B cell (primary cell): ENCODE measurements at regions of chr17 and their contacts with region 1.

Region 1: DNA sequence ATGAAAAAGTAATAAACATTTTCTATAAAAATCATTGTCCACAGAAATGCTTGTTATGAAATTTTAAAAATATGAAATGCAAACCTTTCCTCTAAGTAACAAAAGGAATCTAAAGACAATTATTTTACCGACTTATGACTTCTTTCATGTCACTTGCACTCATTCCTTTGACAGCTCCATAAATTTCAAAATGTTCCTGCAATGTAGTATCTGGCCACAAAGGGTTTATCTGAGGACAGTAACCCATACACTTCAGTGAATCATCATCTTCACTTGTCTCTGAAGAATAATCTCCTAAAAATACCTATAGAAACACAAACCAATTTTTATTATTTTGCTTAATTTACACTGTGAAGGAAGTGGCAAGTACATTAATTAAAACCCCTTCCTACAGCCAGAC is 25.6 kb upstream of the ABCA10 start:
- DNase-seq: no peak
- ATAC-seq: no peak
- H3K4me3 ChIP-seq: no peak overlapping the region
- H3K4me3 Mint-ChIP-seq: no peak overlapping the region
- H3K27ac ChIP-seq: no peak overlapping the region
- H3K27ac Mint-ChIP-seq: no peak overlapping the region
- H3K4me1 ChIP-seq: no peaks in the 10 kb centered on the region
- H3K4me1 Mint-ChIP-seq: no peaks in the 10 kb centered on the region
- H3K27me3 ChIP-seq: no peaks in the 10 kb centered on the region
- H3K27me3 Mint-ChIP-seq: no peaks in the 10 kb centered on the region
- CTCF ChIP-seq: no peak

Region 2: GRCh38 chr17:68446626-68447041 is 807.6 kb before region 1 on chr17:
- CTCF ChIA-PET with region 1: no interaction called
- POLR2A ChIA-PET with region 1: interaction called, 10 read pairs
- intact Hi-C with region 1: no loop called
- DNase-seq: no peak
- ATAC-seq: no peak
- H3K4me3 ChIP-seq: no peak overlapping the region
- H3K4me3 Mint-ChIP-seq: no peak overlapping the region
- H3K27ac ChIP-seq: no peak overlapping the region
- H3K27ac Mint-ChIP-seq: no peak overlapping the region
- H3K4me1 ChIP-seq: peaks cover under 1 to 2% of the 10 kb centered on the region in 2 donors
- H3K4me1 Mint-ChIP-seq: peaks cover 1% of the 10 kb centered on the region
- H3K27me3 ChIP-seq: no peaks in the 10 kb centered on the region
- H3K27me3 Mint-ChIP-seq: no peaks in the 10 kb centered on the region
- CTCF ChIP-seq: no peak

Region 3: DNA sequence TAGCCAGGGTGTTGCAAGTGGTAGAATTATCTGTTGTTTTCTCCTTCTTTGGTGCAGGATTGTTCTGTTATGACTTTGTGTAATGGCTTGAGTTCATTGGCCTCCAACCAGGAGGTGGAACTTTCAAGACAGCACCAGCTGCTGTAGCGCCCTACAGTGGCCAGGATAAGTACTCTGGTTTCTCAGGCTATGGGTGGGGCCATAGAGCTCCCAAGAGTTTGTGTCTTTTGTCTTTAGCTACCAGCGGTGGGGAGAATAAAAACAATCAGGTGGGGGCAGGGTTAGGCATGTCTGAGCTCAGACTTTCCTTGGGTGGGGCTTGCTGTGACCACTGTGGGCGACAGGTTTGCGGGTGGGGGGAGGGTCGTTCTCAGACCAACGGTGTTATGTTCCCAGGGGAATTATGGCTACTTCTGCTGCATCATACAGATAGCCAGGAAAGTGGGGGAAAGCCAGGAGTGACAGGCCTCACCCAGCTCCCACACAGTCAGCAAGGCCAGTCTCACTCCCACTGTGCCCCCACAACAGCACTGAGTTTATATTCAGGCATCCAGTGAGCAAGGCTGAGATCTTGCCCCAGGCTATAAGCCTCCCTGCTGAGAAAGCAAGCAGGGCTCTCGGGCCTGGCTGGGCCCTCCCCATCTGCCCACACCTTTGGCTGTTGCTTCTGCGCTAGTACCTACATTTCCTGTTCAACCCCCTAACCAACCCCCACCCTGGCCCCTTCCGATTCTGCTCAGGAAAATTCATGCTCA is 41.0 kb before region 1 on chr17:
- CTCF ChIA-PET with region 1: no interaction called
- POLR2A ChIA-PET with region 1: no interaction called
- intact Hi-C with region 1: no loop called
- DNase-seq: no peak
- ATAC-seq: no peak
- H3K4me3 ChIP-seq: no peak overlapping the region
- H3K4me3 Mint-ChIP-seq: no peak overlapping the region
- H3K27ac ChIP-seq: no peak overlapping the region
- H3K27ac Mint-ChIP-seq: no peak overlapping the region
- H3K4me1 ChIP-seq: no peaks in the 10 kb centered on the region
- H3K4me1 Mint-ChIP-seq: peaks cover 2% of the 10 kb centered on the region
- H3K27me3 ChIP-seq: no peaks in the 10 kb centered on the region
- H3K27me3 Mint-ChIP-seq: no peaks in the 10 kb centered on the region
- CTCF ChIP-seq: no peak